ENCODE measurements at regions of chr11 and their contacts with region 1.

Region 1: GRCh38 chr11:31351168-31351567 is 18.4 kb downstream of the DCDC1 start:
- DNase-seq: no peak
- ATAC-seq: no peak
- H3K4me3 ChIP-seq: no peak overlapping the region
- H3K4me3 Mint-ChIP-seq: no peak overlapping the region
- H3K27ac ChIP-seq: no peak overlapping the region
- H3K27ac Mint-ChIP-seq: no peak overlapping the region
- H3K4me1 ChIP-seq: no peaks in the 10 kb centered on the region
- H3K4me1 Mint-ChIP-seq: no peaks in the 10 kb centered on the region
- H3K27me3 ChIP-seq: no peaks in the 10 kb centered on the region
- H3K27me3 Mint-ChIP-seq: peaks cover 36% of the 10 kb centered on the region
- CTCF ChIP-seq: no peak

Region 2: GRCh38 chr11:31375879-31376278 is 24.7 kb after region 1 on chr11:
- CTCF ChIA-PET with region 1: no interaction called
- POLR2A ChIA-PET with region 1: no interaction called
- intact Hi-C with region 1: loop called in 1 of 2 experiments (anchors 2 kb)
- DNase-seq: no peak
- ATAC-seq: no peak
- H3K4me3 ChIP-seq: no peak overlapping the region
- H3K4me3 Mint-ChIP-seq: no peak overlapping the region
- H3K27ac ChIP-seq: no peak overlapping the region
- H3K27ac Mint-ChIP-seq: no peak overlapping the region
- H3K4me1 ChIP-seq: no peaks in the 10 kb centered on the region
- H3K4me1 Mint-ChIP-seq: peaks cover 52% of the 10 kb centered on the region
- H3K27me3 ChIP-seq: no peaks in the 10 kb centered on the region
- H3K27me3 Mint-ChIP-seq: no peaks in the 10 kb centered on the region
- CTCF ChIP-seq: no peak

Region 3: DNA sequence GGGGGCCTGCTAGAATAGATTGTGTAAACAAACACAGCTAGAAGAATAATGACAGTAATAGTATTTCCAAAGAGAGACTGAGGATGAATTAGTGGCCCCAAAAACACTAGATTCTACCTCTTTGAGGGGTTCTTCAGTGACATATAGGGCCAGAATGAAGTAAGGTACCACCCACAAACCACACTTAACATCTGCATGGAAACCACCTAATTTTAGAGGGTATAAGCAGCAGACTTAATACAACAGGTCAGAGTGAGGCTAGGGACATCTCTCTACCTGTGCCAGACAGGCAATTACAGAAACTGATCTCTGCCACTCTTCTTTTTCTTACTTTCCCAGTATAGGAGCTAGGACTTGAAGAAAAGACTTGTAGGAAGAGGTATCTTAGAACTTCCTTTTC is 178.5 kb after region 1 on chr11:
- CTCF ChIA-PET with region 1: no interaction called
- POLR2A ChIA-PET with region 1: no interaction called
- intact Hi-C with region 1: no loop called
- DNase-seq: no peak
- ATAC-seq: no peak
- H3K4me3 ChIP-seq: no peak overlapping the region
- H3K4me3 Mint-ChIP-seq: no peak overlapping the region
- H3K27ac ChIP-seq: no peak overlapping the region
- H3K27ac Mint-ChIP-seq: no peak overlapping the region
- H3K4me1 ChIP-seq: no peaks in the 10 kb centered on the region
- H3K4me1 Mint-ChIP-seq: no peaks in the 10 kb centered on the region
- H3K27me3 ChIP-seq: no peaks in the 10 kb centered on the region
- H3K27me3 Mint-ChIP-seq: no peaks in the 10 kb centered on the region
- CTCF ChIP-seq: no peak

Region 4: DNA sequence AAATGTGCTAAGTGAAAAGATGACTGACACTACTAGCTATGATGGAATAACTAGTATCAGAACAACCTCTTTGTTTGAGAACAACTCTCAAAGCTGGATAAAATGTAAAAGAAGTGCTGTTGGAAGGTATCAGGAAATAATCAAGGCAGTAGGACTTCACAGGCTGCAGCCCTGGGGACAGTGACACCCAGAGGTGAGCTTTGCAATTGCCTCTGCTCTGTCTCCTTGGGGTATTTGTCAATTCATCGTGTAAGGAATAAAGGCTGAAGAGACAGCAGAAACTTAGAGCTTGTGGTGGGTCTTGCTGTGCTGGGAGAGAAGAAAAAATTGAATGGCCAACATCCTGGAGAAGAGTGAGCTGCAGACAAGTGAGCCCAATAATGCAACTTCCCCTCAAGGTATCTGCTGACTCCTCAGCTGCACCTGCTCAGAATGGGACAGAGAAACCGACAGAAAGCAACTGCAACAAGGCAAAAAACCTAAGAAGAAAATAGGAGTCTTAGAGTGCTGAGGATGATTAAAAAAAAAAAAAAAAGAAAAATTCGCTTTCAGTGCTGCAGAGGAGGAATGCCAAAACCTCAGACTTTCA is 880.8 kb after region 1 on chr11:
- CTCF ChIA-PET with region 1: no interaction called
- POLR2A ChIA-PET with region 1: no interaction called
- intact Hi-C with region 1: no loop called
- DNase-seq: peak in 1 of 14 experiments; percentile 1
- ATAC-seq: no peak
- H3K4me3 ChIP-seq: no peak overlapping the region
- H3K4me3 Mint-ChIP-seq: no peak overlapping the region
- H3K27ac ChIP-seq: no peak overlapping the region
- H3K27ac Mint-ChIP-seq: no peak overlapping the region
- H3K4me1 ChIP-seq: no peaks in the 10 kb centered on the region
- H3K4me1 Mint-ChIP-seq: no peaks in the 10 kb centered on the region
- H3K27me3 ChIP-seq: peaks cover 0 to 6% of the 10 kb centered on the region in 2 experiments
- H3K27me3 Mint-ChIP-seq: peaks cover 21% of the 10 kb centered on the region
- CTCF ChIP-seq: no peak